Activated T-helper 1 cell treated with anti-CD3 and anti-CD28 coated beads, Interleukin-12 subunit alpha, Interleukin-12 subunit beta, Interleukin-2, Interleukin-4 antibody, amounts not matched to agents 30 ng/mL and 10 ng/mL and 1 ng/mL, durations not matched to agents 14 hours and 24 hours and 36 hours (primary cell): ENCODE measurements at regions of chr12 and their contacts with region 1.

Region 1: DNA sequence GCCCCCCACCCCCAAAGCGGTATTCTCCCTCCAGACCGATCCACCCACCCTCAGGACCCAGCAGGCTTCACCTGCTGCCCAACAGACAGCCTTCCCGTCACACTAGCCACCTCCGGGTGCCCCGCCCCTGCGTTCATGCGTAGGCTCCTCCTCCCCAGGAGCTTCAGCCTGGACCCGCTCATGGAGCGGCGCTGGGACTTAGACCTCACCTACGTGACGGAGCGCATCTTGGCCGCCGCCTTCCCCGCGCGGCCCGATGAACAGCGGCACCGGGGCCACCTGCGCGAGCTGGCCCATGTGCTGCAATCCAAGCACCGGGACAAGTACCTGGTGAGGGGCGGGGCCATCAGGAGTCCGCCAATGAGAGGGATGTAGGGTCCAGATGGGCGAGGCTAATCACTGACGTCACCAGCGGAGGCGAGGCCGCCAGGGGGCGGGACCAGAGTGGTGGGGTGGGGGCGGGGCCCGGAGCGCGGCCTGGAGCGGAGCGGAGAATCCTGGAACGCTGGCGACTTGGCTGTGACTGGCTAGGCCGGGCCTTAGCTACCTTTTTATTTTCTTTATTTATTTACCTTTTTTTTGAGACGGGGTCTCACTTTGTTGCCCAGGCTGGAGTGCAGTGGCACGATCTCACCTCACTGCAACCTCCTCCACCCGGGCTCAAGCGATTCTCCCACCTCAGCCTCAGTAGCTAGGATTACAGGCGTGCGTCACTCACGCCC is 4.4 kb downstream of the TNS2 start:
- DNase-seq: peak; percentile 87
- H3K4me3 Mint-ChIP-seq: peak overlapping the region; percentile 93
- H3K27ac Mint-ChIP-seq: peak overlapping the region; percentile 93
- H3K4me1 Mint-ChIP-seq: peaks cover 18% of the 10 kb centered on the region
- H3K27me3 Mint-ChIP-seq: no peaks in the 10 kb centered on the region

Region 2: DNA sequence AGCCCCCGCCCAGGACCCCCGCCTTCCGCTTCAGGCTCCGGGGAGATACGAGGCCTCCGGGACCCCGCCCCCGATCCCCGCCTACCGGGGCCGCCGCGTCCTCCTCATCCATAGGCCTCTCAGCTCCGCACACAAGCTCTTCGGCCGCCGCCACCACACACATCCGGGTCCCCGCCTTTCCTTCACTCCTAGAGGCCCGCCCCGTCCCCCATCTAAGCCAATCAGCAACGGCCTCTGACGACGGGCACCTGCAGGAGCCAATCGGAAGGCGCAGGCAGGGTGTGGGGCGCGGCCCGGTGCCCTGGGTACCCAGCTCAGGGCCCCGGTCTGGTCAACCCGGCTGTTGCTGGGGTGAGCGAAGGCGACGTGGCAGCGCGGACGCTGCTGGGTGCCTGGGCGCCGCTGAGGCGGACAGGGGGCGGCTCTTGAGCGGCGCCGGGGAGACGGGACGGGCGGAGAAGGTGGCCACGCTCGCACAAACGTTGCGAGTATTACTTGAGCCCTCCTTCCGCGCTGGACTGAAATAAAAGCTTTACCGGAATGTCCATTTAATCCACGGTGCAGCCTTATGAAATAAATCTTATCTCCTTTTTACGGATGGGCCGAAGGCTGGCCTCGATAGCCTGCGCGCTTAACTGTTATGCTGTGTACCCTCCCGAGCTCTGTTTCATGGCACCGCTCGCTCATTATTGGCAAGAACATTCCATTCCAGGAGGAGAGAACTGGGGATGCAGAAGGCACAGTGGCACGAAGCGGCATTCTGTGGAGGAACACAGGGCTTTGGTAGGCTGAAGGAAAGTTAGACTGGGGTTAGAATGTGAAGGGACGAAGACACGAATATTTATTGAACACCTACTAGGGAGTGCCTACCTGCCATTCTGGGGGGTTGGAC is 25.2 kb after region 1 on chr12 and contains the start of gene SPRYD3:
- intact Hi-C with region 1: loop called (anchors 1 kb)
- DNase-seq: peak; percentile 97
- H3K4me3 Mint-ChIP-seq: peak within 1 kb of the TSS; percentile 93
- H3K27ac Mint-ChIP-seq: peak within 1 kb of the TSS; percentile 92
- H3K4me1 Mint-ChIP-seq: peaks cover 36% of the 10 kb centered on the region
- H3K27me3 Mint-ChIP-seq: no peaks in the 10 kb centered on the region
- total RNA-seq, gene SPRYD3: 41.2 and 42.6 TPM in 2 replicates